B cell (primary cell): ENCODE measurements at regions of chr19 and their contacts with region 1.

Region 1: DNA sequence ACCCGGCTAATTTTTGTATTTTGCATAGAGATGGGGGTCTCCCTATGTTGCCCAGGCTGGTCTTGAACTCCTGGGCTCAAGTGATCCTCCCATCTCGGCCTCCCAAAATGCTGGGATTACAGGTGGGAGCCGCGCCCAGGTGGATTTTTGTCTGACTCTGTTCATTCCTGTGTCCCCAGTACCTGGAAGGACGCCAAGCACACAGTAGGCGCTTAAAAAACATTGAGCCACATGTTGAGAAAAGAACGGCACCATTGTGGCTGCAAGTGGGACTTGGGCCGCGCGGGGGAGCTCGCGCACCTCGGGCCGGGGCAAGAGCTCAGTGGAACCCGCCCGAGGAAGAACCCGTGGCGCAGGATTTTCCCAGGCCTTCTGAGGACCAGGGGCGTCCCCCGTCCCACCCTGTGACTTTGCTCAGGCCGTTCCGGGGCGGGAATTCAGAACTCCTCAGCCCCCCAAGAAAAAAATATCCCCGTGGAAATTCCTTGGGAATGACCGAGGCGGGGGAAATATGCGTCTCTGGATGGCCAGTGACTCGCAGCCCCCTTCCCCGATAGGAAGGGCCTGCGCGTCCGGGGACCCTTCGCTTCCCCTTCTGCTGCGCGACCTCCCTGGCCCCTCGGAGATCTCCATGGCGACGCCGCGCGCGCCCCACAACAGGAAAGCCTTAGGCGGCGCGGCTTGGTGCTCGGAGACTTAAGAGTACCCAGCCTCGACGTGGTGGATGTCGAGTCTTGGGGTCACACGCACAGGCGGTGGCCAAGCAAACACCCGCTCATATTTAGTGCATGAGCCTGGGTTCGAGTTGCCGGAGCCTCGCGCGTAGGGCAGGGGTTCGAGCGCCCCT is 1.4 kb upstream of the ICAM1 start:
- DNase-seq: peak; percentile 91
- ATAC-seq: peak; percentile 43
- H3K4me3 ChIP-seq: peak overlapping the region; percentile 1 to 72 (median 56)
- H3K4me3 Mint-ChIP-seq: peak overlapping the region; percentile 88
- H3K27ac ChIP-seq: peak overlapping the region; percentile 90 to 97
- H3K27ac Mint-ChIP-seq: peak overlapping the region; percentile 94
- H3K4me1 ChIP-seq: peaks cover 13 to 35% of the 10 kb centered on the region in 2 donors
- H3K4me1 Mint-ChIP-seq: peaks cover 32% of the 10 kb centered on the region
- H3K27me3 ChIP-seq: no peaks in the 10 kb centered on the region
- H3K27me3 Mint-ChIP-seq: no peaks in the 10 kb centered on the region
- CTCF ChIP-seq: peak; percentile 93

Region 2: GRCh38 chr19:9610484-9611113 is 659.0 kb before region 1 on chr19:
- CTCF ChIA-PET with region 1: no interaction called
- POLR2A ChIA-PET with region 1: no interaction called
- intact Hi-C with region 1: no loop called
- DNase-seq: no peak
- ATAC-seq: no peak
- H3K4me3 ChIP-seq: no peak overlapping the region
- H3K4me3 Mint-ChIP-seq: no peak overlapping the region
- H3K27ac ChIP-seq: no peak overlapping the region
- H3K27ac Mint-ChIP-seq: no peak overlapping the region
- H3K4me1 ChIP-seq: no peaks in the 10 kb centered on the region
- H3K4me1 Mint-ChIP-seq: peaks cover 2% of the 10 kb centered on the region
- H3K27me3 ChIP-seq: no peaks in the 10 kb centered on the region
- H3K27me3 Mint-ChIP-seq: no peaks in the 10 kb centered on the region
- CTCF ChIP-seq: no peak

Region 3: DNA sequence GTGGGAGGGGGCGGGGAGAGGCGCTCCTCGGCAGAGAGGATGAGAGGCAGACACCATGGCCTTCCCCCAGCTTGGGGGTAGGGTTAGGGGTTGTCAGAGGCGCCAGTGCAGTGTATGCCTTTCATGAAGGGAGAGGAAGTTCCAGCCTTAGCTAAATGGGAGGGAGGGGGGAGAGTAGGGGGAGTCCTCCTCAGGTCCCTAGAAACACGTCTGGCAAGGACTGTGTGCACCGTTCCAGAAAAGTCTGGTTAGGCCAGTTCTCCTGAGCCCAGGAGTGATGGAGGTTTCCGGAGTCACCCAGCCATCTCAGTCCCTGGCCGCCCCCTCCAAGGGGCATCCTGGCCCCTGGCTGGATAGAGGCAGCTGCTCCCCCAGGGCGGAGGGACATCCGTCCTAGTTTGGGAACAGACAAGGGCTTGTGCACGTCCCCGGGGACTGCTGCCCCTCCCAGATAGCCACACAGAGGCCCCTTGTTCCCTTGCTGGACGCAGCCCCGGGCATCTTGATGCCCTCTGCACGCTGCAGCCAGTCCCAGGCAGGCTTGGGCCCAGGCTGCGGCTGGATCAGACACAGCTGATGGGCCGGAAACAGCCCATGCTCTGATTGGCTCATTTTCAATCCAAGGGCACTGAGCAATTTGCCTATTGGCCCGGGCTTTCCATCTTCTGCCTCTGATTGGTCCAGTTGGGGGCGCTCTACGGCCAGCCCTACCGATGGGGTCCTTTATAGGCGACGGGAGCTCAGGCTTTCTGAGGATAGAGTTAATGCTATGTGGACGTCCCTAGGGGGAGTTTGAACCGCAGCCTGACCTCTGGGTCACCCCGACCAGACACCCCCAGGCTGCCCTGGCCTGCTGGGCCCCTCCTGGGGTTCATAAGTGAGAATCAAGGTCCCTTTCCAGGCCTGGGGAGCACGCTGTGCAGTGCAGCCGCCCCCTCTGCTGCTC is 42.3 kb before region 1 on chr19:
- CTCF ChIA-PET with region 1: no interaction called
- POLR2A ChIA-PET with region 1: no interaction called
- intact Hi-C with region 1: no loop called
- DNase-seq: no peak
- ATAC-seq: no peak
- H3K4me3 ChIP-seq: no peak overlapping the region
- H3K4me3 Mint-ChIP-seq: no peak overlapping the region
- H3K27ac ChIP-seq: no peak overlapping the region
- H3K27ac Mint-ChIP-seq: no peak overlapping the region
- H3K4me1 ChIP-seq: peaks cover 18 to 35% of the 10 kb centered on the region in 2 donors
- H3K4me1 Mint-ChIP-seq: peaks cover 28% of the 10 kb centered on the region
- H3K27me3 ChIP-seq: no peaks in the 10 kb centered on the region
- H3K27me3 Mint-ChIP-seq: no peaks in the 10 kb centered on the region
- CTCF ChIP-seq: no peak

Region 4: GRCh38 chr19:10238172-10238783 is 31.3 kb before region 1 on chr19:
- CTCF ChIA-PET with region 1: interaction called, 4 read pairs
- POLR2A ChIA-PET with region 1: no interaction called
- intact Hi-C with region 1: loop called (anchors 2 kb)
- DNase-seq: peak; percentile 51
- ATAC-seq: no peak
- H3K4me3 ChIP-seq: no peak overlapping the region
- H3K4me3 Mint-ChIP-seq: peak overlapping the region; percentile 29
- H3K27ac ChIP-seq: no peak overlapping the region
- H3K27ac Mint-ChIP-seq: peak overlapping the region; percentile 53
- H3K4me1 ChIP-seq: peaks cover 40 to 63% of the 10 kb centered on the region in 2 donors
- H3K4me1 Mint-ChIP-seq: peaks cover 40% of the 10 kb centered on the region
- H3K27me3 ChIP-seq: no peaks in the 10 kb centered on the region
- H3K27me3 Mint-ChIP-seq: no peaks in the 10 kb centered on the region
- CTCF ChIP-seq: no peak

Region 5: GRCh38 chr19:10286803-10287737 is 17.5 kb after region 1 on chr19 and contains the start of gene ICAM4:
- CTCF ChIA-PET with region 1: interaction called, 116 read pairs
- POLR2A ChIA-PET with region 1: interaction called, 27 read pairs
- intact Hi-C with region 1: loop called (anchors 1 kb)
- DNase-seq: peak; percentile 66
- ATAC-seq: no peak
- H3K4me3 ChIP-seq: peak within 1 kb of the TSS in 3 of 5 experiments; percentile 18 to 23 (median 19)
- H3K4me3 Mint-ChIP-seq: peak within 1 kb of the TSS; percentile 77
- H3K27ac ChIP-seq: no peak within 1 kb of the TSS
- H3K27ac Mint-ChIP-seq: peak within 1 kb of the TSS; percentile 71
- H3K4me1 ChIP-seq: peaks cover 61% of the 10 kb centered on the region in 2 donors
- H3K4me1 Mint-ChIP-seq: peaks cover 58% of the 10 kb centered on the region
- H3K27me3 ChIP-seq: peaks cover 0 to 53% (median 33%) of the 10 kb centered on the region in 4 experiments
- H3K27me3 Mint-ChIP-seq: peaks cover 22% of the 10 kb centered on the region
- CTCF ChIP-seq: no peak
- total RNA-seq, gene ICAM4: 0.44 and 0.51 TPM in 2 replicates

Region 6: DNA sequence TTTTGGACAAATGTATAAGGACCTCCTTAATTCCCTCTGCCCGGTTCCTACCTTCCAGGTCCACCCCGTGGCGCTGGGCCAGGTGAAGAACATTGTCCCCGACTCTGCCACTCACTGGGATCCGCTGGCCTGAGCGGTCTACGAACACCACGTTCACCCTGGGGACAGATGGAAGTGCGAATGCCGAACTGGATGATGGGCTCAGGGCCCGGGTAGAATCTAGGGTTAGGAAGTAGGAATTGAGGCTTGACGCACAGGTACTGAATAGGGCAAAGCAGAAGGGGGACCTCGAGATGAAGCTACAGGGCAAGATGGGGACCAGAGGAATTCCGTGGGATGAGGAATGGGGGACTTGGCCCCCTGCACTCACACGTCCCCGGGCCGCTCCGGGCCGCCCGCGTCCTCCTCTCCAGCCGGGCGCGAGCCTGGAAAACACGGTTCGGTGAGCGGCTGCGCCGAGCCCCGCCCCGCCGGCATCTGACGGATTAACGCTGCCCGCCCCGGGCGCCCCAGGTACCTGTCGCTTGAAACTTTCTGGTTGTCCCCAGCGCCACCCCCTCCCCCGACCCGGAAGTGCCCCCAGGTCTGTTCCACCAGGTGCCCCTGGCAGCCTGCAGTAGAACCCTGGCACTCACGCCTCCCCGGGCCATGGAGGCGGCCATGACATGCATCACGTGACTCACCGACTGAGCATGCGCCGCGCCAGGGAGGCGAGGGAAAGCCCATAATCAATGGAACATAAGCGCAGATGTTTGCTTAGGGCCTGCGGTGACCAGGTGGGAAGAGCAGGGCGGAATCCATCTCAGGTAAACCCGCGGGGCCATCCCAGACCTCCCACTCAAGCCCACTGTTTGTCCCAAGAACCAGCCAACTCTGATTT is 46.0 kb after region 1 on chr19 and contains the start of gene FDX2:
- CTCF ChIA-PET with region 1: interaction called, 3 read pairs
- POLR2A ChIA-PET with region 1: no interaction called
- intact Hi-C with region 1: loop called (anchors 1 kb)
- DNase-seq: peak; percentile 92
- ATAC-seq: peak; percentile 91
- H3K4me3 ChIP-seq: peak within 1 kb of the TSS; percentile 31 to 91 (median 80)
- H3K4me3 Mint-ChIP-seq: peak within 1 kb of the TSS; percentile 96
- H3K27ac ChIP-seq: peak within 1 kb of the TSS in 1 of 2 donors; percentile 55
- H3K27ac Mint-ChIP-seq: peak within 1 kb of the TSS; percentile 85
- H3K4me1 ChIP-seq: peaks cover 6 to 14% of the 10 kb centered on the region in 2 donors
- H3K4me1 Mint-ChIP-seq: peaks cover 14% of the 10 kb centered on the region
- H3K27me3 ChIP-seq: no peaks in the 10 kb centered on the region
- H3K27me3 Mint-ChIP-seq: no peaks in the 10 kb centered on the region
- CTCF ChIP-seq: no peak
- total RNA-seq, gene FDX2: 13.6 and 13.9 TPM in 2 replicates

Region 7: DNA sequence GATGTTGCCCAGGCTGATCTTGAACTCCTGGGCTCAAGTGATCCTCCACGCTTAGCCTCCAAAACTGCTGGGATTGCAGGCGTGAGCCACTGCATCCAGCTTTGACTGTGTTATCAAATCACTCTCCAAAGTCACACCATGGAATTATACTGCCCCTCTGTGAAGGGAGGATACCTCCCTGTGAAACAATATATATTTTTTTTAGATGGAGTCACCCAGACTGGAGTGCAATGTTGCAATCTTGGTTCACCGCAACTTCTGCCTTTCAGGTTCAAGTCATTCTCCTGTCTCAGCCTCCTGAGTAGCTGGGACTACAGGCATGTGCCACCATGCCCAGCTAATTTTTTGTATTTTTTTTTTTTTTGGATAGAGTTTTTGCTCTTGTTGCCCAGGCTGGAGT is 103.1 kb after region 1 on chr19:
- CTCF ChIA-PET with region 1: interaction called, 11 read pairs
- POLR2A ChIA-PET with region 1: no interaction called
- intact Hi-C with region 1: no loop called
- DNase-seq: no peak
- ATAC-seq: no peak
- H3K4me3 ChIP-seq: no peak overlapping the region
- H3K4me3 Mint-ChIP-seq: no peak overlapping the region
- H3K27ac ChIP-seq: no peak overlapping the region
- H3K27ac Mint-ChIP-seq: no peak overlapping the region
- H3K4me1 ChIP-seq: peaks cover 7 to 10% of the 10 kb centered on the region in 2 donors
- H3K4me1 Mint-ChIP-seq: peaks cover 13% of the 10 kb centered on the region
- H3K27me3 ChIP-seq: no peaks in the 10 kb centered on the region
- H3K27me3 Mint-ChIP-seq: no peaks in the 10 kb centered on the region
- CTCF ChIP-seq: no peak

Region 8: GRCh38 chr19:10388957-10389356 is 119.4 kb after region 1 on chr19:
- CTCF ChIA-PET with region 1: interaction called, 570 read pairs
- POLR2A ChIA-PET with region 1: interaction called, 32 read pairs
- intact Hi-C with region 1: loop called (anchors 1 kb)
- DNase-seq: peak; percentile 87
- ATAC-seq: peak; percentile 55
- H3K4me3 ChIP-seq: no peak overlapping the region
- H3K4me3 Mint-ChIP-seq: no peak overlapping the region
- H3K27ac ChIP-seq: no peak overlapping the region
- H3K27ac Mint-ChIP-seq: no peak overlapping the region
- H3K4me1 ChIP-seq: peaks cover 0 to 8% of the 10 kb centered on the region in 2 donors
- H3K4me1 Mint-ChIP-seq: peaks cover 10% of the 10 kb centered on the region
- H3K27me3 ChIP-seq: no peaks in the 10 kb centered on the region
- H3K27me3 Mint-ChIP-seq: no peaks in the 10 kb centered on the region
- CTCF ChIP-seq: peak; percentile 96